ENCODE measurements at regions of chr1 and their contacts with region 1.

Region 1: GRCh38 chr1:43587594-43587993 is 56.9 kb downstream of the PTPRF start:
- DNase-seq: no peak
- ATAC-seq: no peak
- H3K4me3 ChIP-seq: no peak overlapping the region
- H3K27ac ChIP-seq: no peak overlapping the region
- H3K4me1 ChIP-seq: no peaks in the 10 kb centered on the region
- H3K27me3 ChIP-seq: no peaks in the 10 kb centered on the region
- CTCF ChIP-seq: no peak

Region 2: GRCh38 chr1:43604192-43604591 is 16.6 kb after region 1 on chr1:
- CTCF ChIA-PET with region 1: interaction called, 12 read pairs
- POLR2A ChIA-PET with region 1: no interaction called
- in situ Hi-C with region 1: no loop called
- intact Hi-C with region 1: no loop called
- DNase-seq: no peak
- ATAC-seq: no peak
- H3K4me3 ChIP-seq: no peak overlapping the region
- H3K27ac ChIP-seq: no peak overlapping the region
- H3K4me1 ChIP-seq: no peaks in the 10 kb centered on the region
- H3K27me3 ChIP-seq: no peaks in the 10 kb centered on the region
- CTCF ChIP-seq: no peak

Region 3: DNA sequence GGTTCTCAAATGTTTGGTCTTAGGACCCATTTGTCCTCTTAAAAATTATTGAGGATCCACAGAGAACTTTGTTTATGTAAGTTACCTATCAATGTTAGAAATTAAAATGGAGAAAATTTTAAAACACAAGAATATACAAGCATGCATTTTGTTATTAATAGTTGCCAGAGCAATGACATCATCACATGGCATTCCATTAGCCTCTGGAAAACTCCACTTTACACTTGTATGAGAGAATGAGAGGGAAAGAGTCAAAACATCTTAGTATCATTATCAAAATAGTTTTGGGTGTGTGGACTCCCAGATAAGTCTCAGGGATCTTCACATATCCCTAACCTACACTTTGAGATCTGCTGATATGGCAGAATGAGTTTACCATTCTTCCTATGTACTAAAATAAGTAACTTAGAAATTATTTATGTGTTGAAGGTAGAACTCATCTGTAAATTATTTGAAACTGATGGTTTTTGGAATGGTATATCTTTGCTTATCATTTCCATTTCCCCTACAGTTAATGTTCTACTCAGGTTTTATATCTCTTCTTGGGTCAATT is 866.3 kb after region 1 on chr1:
- CTCF ChIA-PET with region 1: no interaction called
- POLR2A ChIA-PET with region 1: no interaction called
- in situ Hi-C with region 1: no loop called
- intact Hi-C with region 1: no loop called
- DNase-seq: no peak
- ATAC-seq: no peak
- H3K4me3 ChIP-seq: no peak overlapping the region
- H3K27ac ChIP-seq: no peak overlapping the region
- H3K4me1 ChIP-seq: no peaks in the 10 kb centered on the region
- H3K27me3 ChIP-seq: no peaks in the 10 kb centered on the region
- CTCF ChIP-seq: no peak